Naive thymus-derived CD4-positive, alpha-beta T cell (primary cell): ENCODE measurements at regions of chr1 and their contacts with region 1.

Region 1: GRCh38 chr1:223700942-223701637 is 11.2 kb upstream of the CAPN2 start:
- DNase-seq: peak in 1 of 9 donors; percentile 41
- ATAC-seq: peak; percentile 32
- H3K4me3 ChIP-seq: no peak overlapping the region
- H3K4me3 Mint-ChIP-seq: no peak overlapping the region
- H3K27ac ChIP-seq: no peak overlapping the region
- H3K27ac Mint-ChIP-seq: no peak overlapping the region
- H3K4me1 ChIP-seq: no peaks in the 10 kb centered on the region
- H3K4me1 Mint-ChIP-seq: peaks cover 0 to 15% (median 6%) of the 10 kb centered on the region in 7 donors
- H3K27me3 ChIP-seq: no peaks in the 10 kb centered on the region
- H3K27me3 Mint-ChIP-seq: peaks cover 0 to 11% (median 0%) of the 10 kb centered on the region in 5 donors

Region 2: GRCh38 chr1:223670458-223671168 is 30.5 kb before region 1 on chr1:
- CTCF ChIA-PET with region 1: no interaction called
- POLR2A ChIA-PET with region 1: no interaction called
- intact Hi-C with region 1: no loop called
- DNase-seq: peak in 1 of 9 donors; percentile 6
- ATAC-seq: peak; percentile 40
- H3K4me3 ChIP-seq: no peak overlapping the region
- H3K4me3 Mint-ChIP-seq: no peak overlapping the region
- H3K27ac ChIP-seq: no peak overlapping the region
- H3K27ac Mint-ChIP-seq: no peak overlapping the region
- H3K4me1 ChIP-seq: no peaks in the 10 kb centered on the region
- H3K4me1 Mint-ChIP-seq: no peaks in the 10 kb centered on the region
- H3K27me3 ChIP-seq: no peaks in the 10 kb centered on the region
- H3K27me3 Mint-ChIP-seq: peaks cover 0 to 6% (median 2%) of the 10 kb centered on the region in 5 donors

Region 3: GRCh38 chr1:223712194-223712849 is 11.2 kb after region 1 on chr1 and contains the start of gene CAPN2:
- CTCF ChIA-PET with region 1: interaction called, 6 read pairs
- POLR2A ChIA-PET with region 1: interaction called, 3 read pairs
- intact Hi-C with region 1: loop called (anchors 1 kb)
- DNase-seq: peak; percentile 29 to 78 (median 51)
- ATAC-seq: peak; percentile 78
- H3K4me3 ChIP-seq: peak within 1 kb of the TSS; percentile 61
- H3K4me3 Mint-ChIP-seq: peak within 1 kb of the TSS; percentile 70 to 93 (median 84)
- H3K27ac ChIP-seq: peak within 1 kb of the TSS; percentile 83
- H3K27ac Mint-ChIP-seq: peak within 1 kb of the TSS; percentile 82 to 93 (median 88)
- H3K4me1 ChIP-seq: peaks cover 48 to 53% of the 10 kb centered on the region in 2 donors
- H3K4me1 Mint-ChIP-seq: peaks cover 52 to 69% (median 63%) of the 10 kb centered on the region in 7 donors
- H3K27me3 ChIP-seq: no peaks in the 10 kb centered on the region
- H3K27me3 Mint-ChIP-seq: peaks cover 0 to 8% (median 0%) of the 10 kb centered on the region in 5 donors
- total RNA-seq, gene CAPN2: 86.1 to 195 (median 117) TPM

Region 4: DNA sequence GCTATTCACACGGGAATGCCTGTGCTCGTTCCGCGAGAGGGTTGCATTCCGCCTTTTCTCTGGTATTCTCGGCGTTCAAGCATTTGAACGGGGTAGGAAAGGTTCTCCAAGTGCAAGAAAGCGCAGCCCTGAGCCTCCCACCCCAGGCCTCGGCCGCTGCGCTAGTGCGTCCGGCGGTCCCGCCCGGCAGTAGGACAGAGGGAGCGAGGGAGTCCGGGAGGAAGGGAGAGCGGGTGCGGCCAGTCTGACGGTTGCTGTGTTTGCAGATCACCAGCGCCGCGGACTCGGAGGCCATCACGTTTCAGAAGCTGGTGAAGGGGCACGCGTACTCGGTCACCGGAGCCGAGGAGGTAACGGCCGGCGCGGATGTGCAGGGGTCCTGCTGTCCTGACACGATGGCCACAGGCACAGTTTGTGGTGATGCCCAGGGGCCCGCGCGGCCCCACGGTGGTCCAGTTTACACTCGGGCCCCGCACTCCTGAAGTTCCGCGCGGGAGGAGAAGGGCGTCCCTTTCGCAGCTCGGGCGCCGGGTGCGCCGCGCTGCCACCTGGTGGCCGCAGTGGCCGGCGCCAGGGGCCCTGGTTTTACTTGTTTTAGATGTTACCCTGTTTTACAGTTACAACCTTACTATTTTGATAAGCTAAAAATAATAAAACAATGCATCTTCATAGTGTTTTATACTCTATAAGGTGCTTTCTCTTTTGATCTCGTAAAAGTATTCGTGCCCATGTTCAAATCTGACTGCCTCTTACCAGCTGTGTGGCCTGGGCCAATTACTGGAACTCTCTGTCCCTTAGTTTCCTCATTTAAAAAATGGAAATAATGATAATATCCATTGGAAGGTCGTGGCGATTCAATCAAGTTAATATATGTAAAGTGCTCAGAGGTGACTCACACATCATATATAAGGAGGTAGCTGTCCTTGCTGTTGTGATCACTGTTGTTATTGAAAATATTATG is 48.0 kb after region 1 on chr1:
- CTCF ChIA-PET with region 1: interaction called, 38 read pairs
- POLR2A ChIA-PET with region 1: interaction called, 6 read pairs
- intact Hi-C with region 1: loop called (anchors 1 kb)
- DNase-seq: peak; percentile 46 to 78 (median 67)
- ATAC-seq: peak; percentile 89
- H3K4me3 ChIP-seq: peak overlapping the region; percentile 68
- H3K4me3 Mint-ChIP-seq: peak overlapping the region; percentile 70 to 85 (median 75)
- H3K27ac ChIP-seq: peak overlapping the region; percentile 27
- H3K27ac Mint-ChIP-seq: peak overlapping the region in 4 of 9 donors; percentile 21 to 68 (median 34)
- H3K4me1 ChIP-seq: peaks cover 7 to 10% of the 10 kb centered on the region in 2 donors
- H3K4me1 Mint-ChIP-seq: peaks cover 0 to 22% (median 8%) of the 10 kb centered on the region in 7 donors
- H3K27me3 ChIP-seq: no peaks in the 10 kb centered on the region
- H3K27me3 Mint-ChIP-seq: no peaks in the 10 kb centered on the region

Region 5: GRCh38 chr1:224052772-224053171 is 351.7 kb after region 1 on chr1:
- CTCF ChIA-PET with region 1: interaction called, 3 read pairs
- POLR2A ChIA-PET with region 1: no interaction called
- intact Hi-C with region 1: loop called in 1 of 2 experiments (anchors 1 kb)
- DNase-seq: no peak
- ATAC-seq: no peak
- H3K4me3 ChIP-seq: no peak overlapping the region
- H3K4me3 Mint-ChIP-seq: no peak overlapping the region
- H3K27ac ChIP-seq: no peak overlapping the region
- H3K27ac Mint-ChIP-seq: no peak overlapping the region
- H3K4me1 ChIP-seq: no peaks in the 10 kb centered on the region
- H3K4me1 Mint-ChIP-seq: peaks cover 0 to 4% (median 0%) of the 10 kb centered on the region in 7 donors
- H3K27me3 ChIP-seq: no peaks in the 10 kb centered on the region
- H3K27me3 Mint-ChIP-seq: peaks cover 0 to 10% (median 0%) of the 10 kb centered on the region in 5 donors

Region 6: DNA sequence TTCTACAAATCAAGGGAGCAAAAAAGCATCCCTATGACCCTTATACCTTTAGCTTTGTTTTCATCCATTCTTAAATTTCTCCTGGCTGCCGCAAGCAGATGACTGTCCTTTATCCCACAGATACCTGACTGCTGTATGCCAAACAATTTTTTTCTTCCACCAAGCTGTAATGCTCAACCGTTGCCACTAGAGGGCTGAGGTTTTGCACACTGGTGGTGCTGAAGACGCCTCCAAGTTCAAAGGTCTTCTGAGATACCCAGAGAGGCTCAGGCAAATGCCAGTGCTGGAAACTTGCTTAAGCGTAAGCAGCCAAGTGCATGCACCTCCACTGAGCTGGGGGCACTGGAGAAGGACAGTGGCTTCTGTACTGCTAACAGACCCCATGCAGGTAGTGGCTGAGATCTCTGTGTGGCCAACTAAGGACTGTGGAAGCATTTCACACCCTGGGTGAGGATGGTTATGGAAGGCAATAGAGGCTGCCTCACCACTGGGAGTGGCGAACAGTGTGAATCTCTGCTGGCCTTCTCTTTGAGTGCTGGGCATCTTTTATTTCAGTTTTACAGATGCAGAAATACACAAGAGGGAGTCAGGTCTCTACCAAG is 943.6 kb after region 1 on chr1:
- CTCF ChIA-PET with region 1: no interaction called
- POLR2A ChIA-PET with region 1: no interaction called
- intact Hi-C with region 1: no loop called
- DNase-seq: peak; percentile 16 to 65 (median 53)
- ATAC-seq: peak; percentile 78
- H3K4me3 ChIP-seq: no peak overlapping the region
- H3K4me3 Mint-ChIP-seq: no peak overlapping the region
- H3K27ac ChIP-seq: no peak overlapping the region
- H3K27ac Mint-ChIP-seq: no peak overlapping the region
- H3K4me1 ChIP-seq: no peaks in the 10 kb centered on the region
- H3K4me1 Mint-ChIP-seq: peaks cover 0 to 8% (median 0%) of the 10 kb centered on the region in 7 donors
- H3K27me3 ChIP-seq: no peaks in the 10 kb centered on the region
- H3K27me3 Mint-ChIP-seq: peaks cover 0 to 14% (median 6%) of the 10 kb centered on the region in 5 donors